Activated B cell treated with CpG ODN at 0.5 μM for 24 hours (primary cell): ENCODE measurements at regions of chr1 and their contacts with region 1.

Region 1: GRCh38 chr1:211323156-211324063 is 3.2 kb upstream of the TRAF5 start:
- DNase-seq: no peak
- ATAC-seq: peak; percentile 62
- H3K4me3 Mint-ChIP-seq: no peak overlapping the region
- H3K27ac Mint-ChIP-seq: no peak overlapping the region
- H3K4me1 Mint-ChIP-seq: peaks cover 41% of the 10 kb centered on the region
- H3K27me3 Mint-ChIP-seq: no peaks in the 10 kb centered on the region
- CTCF ChIP-seq: peak; percentile 19

Region 2: GRCh38 chr1:209784265-209785169 is 1538.9 kb before region 1 on chr1 and contains the start of gene C1orf74:
- CTCF ChIA-PET with region 1: no interaction called
- POLR2A ChIA-PET with region 1: no interaction called
- intact Hi-C with region 1: loop called (anchors 5 kb)
- DNase-seq: peak; percentile 99
- ATAC-seq: peak; percentile 98
- H3K4me3 Mint-ChIP-seq: peak within 1 kb of the TSS; percentile 99
- H3K27ac Mint-ChIP-seq: peak within 1 kb of the TSS; percentile 98
- H3K4me1 Mint-ChIP-seq: peaks cover 20% of the 10 kb centered on the region
- H3K27me3 Mint-ChIP-seq: peaks cover 10% of the 10 kb centered on the region
- CTCF ChIP-seq: no peak
- total RNA-seq, gene C1orf74: 3.7 TPM in 2 replicates

Region 3: DNA sequence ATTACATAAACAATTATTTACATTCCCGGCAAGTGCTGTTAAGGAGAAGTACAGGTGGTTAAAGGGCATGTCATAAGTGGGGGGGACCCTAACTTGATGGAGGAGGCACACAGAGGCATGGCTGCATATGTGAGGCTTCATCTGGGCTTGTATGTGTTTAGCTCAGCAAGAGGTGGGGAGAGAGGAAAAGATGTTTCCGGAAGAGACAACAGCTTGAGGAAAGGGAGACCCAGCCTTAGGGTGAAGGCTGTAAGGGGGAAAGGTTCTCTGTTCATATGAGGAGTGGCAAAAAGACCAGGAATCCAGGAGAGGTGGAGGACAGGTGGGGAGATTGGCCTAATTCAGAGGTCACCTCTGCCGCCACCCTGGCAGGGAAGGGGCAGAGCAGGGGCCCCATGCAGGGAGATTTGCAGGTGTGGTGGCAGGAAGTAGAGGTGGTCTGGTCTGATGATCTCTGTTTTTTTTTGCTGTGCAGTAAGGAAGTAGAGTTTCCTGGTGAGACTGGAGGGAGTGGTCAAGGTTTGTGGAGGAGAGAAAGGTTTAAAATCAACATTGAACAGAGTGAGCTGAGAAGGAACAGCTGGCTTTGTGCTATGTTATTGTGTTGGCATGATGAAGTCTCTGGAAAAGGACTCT is 12.2 kb after region 1 on chr1:
- CTCF ChIA-PET with region 1: interaction called, 34 read pairs
- POLR2A ChIA-PET with region 1: interaction called, 68 read pairs
- intact Hi-C with region 1: loop called (anchors 1 kb)
- DNase-seq: no peak
- ATAC-seq: peak; percentile 86
- H3K4me3 Mint-ChIP-seq: peak overlapping the region; percentile 70
- H3K27ac Mint-ChIP-seq: peak overlapping the region; percentile 88
- H3K4me1 Mint-ChIP-seq: peaks cover 100% of the 10 kb centered on the region
- H3K27me3 Mint-ChIP-seq: no peaks in the 10 kb centered on the region
- CTCF ChIP-seq: no peak

Region 4: DNA sequence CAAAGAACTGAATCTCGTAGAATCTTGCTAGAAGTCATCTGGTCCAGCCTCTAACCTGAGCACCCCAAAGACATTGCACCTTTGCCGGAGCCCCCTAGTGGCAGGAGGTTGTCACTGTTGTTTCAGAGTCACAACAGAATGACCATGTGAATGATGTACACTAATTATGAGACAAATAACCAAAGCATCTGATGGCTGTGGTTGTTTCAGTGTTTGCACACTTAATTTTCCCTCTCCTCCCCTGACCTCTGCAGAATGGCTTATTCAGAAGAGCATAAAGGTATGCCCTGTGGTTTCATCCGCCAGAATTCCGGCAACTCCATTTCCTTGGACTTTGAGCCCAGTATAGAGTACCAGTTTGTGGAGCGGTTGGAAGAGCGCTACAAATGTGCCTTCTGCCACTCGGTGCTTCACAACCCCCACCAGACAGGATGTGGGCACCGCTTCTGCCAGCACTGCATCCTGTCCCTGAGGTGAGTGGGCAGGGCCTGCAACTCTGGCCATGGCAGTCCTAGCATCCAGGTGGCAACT is 29.6 kb after region 1 on chr1:
- CTCF ChIA-PET with region 1: interaction called, 34 read pairs
- POLR2A ChIA-PET with region 1: interaction called, 5 read pairs
- intact Hi-C with region 1: loop called (anchors 1 kb)
- DNase-seq: no peak
- ATAC-seq: peak; percentile 83
- H3K4me3 Mint-ChIP-seq: peak overlapping the region; percentile 55
- H3K27ac Mint-ChIP-seq: peak overlapping the region; percentile 94
- H3K4me1 Mint-ChIP-seq: peaks cover 60% of the 10 kb centered on the region
- H3K27me3 Mint-ChIP-seq: no peaks in the 10 kb centered on the region
- CTCF ChIP-seq: no peak

Region 5: DNA sequence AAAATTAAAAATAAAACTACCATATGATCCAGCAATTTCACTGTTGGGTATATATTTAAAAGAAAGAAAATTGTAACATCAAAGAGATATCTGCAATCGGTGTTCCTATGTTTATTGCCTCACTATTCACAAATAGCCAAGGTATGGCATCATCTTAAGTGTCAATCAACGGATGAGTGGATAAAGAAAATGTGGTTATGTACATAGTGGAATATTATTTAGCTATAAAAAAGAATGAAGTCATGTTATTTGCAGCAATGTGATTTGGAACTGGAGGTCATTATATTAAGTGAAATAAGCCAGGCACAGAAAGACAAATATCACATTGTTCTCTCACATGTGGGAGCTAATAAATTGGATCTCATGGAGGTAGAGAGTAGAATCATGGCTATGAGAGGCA is 92.3 kb after region 1 on chr1:
- CTCF ChIA-PET with region 1: interaction called, 7 read pairs
- POLR2A ChIA-PET with region 1: interaction called, 5 read pairs
- intact Hi-C with region 1: loop called (anchors 2 kb)
- DNase-seq: no peak
- ATAC-seq: no peak
- H3K4me3 Mint-ChIP-seq: peak overlapping the region; percentile 66
- H3K27ac Mint-ChIP-seq: peak overlapping the region; percentile 25
- H3K4me1 Mint-ChIP-seq: peaks cover 10% of the 10 kb centered on the region
- H3K27me3 Mint-ChIP-seq: no peaks in the 10 kb centered on the region
- CTCF ChIP-seq: no peak

Region 6: DNA sequence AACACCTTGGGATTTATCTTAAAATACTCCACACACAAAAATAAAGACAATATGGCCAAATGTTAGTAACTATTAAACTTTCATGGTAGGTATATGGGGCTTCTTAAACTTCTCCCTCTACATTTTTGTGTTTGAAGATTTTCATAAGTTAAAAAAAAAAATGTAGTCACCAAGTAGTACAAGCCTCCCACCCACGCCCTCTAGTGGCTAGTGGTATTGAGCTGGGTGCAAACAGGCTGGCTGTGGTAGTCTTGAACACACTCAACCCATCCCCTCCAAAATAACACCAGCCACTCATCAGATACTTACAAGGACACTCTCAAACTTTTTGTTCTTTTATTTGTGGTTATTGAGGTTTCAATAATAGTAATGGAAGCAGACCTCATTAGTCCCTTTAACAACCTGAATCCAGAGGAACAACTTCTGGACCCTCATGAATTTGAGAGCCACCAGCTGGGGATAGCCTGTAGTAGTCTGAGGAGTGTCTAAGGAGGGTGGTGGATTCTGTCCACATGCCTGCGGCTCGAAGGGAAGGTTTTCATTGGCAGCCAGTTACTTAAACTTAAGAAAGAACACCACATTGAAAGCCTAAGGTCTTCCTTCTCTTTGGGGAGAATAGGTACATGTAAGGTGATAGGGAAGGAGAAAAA is 152.9 kb after region 1 on chr1:
- CTCF ChIA-PET with region 1: interaction called, 46 read pairs
- POLR2A ChIA-PET with region 1: interaction called, 3 read pairs
- intact Hi-C with region 1: loop called (anchors 1 kb)
- DNase-seq: peak; percentile 39
- ATAC-seq: peak; percentile 72
- H3K4me3 Mint-ChIP-seq: no peak overlapping the region
- H3K27ac Mint-ChIP-seq: no peak overlapping the region
- H3K4me1 Mint-ChIP-seq: peaks cover 2% of the 10 kb centered on the region
- H3K27me3 Mint-ChIP-seq: peaks cover 27% of the 10 kb centered on the region
- CTCF ChIP-seq: peak; percentile 56

Region 7: DNA sequence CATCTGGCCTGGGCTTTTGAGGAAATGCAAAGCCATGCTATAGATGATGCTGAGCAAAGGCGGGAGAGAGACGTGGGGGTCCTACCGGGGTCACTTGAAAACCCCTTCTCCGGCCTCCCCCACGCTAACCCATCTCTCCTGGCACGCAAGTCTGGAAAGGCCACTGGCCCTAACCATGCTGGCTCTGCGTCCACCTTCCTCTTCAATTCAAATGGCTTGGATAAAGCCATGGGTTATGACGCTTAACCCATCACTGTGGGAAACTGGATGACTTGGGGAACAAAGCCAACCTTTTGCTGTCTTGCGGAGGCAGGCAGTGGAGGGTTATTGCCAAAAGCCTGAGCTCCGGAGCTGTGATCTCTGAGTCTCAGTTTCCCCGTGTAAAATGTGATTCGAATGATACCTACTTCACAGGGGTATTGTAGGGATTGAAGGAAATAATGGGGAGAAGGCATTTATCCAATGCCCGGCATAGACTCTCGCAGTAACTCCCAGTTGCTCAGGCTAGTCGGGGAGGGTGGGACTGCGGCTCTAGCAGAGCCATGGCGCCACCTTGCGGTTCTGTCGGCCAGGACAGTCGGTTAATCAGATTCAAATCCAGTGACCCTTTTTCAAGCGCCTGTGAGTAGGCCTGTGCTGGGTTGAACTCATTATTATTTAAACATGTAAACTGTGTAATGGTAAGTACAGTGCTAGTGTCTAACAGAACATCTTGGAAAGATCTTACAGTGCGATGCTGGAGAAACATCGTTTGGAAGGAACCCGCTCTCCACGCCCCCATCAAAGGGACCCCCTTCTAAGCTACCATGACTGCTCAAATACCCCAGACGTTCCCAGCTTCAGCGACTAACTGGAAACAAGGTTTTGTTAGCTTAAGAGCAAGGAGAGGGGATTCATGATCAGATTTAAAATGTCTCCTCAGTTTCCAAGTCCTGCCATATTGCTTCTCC is 331.7 kb after region 1 on chr1:
- CTCF ChIA-PET with region 1: interaction called, 5 read pairs
- POLR2A ChIA-PET with region 1: no interaction called
- intact Hi-C with region 1: loop called (anchors 1 kb)
- DNase-seq: peak; percentile 70
- ATAC-seq: peak; percentile 91
- H3K4me3 Mint-ChIP-seq: no peak overlapping the region
- H3K27ac Mint-ChIP-seq: no peak overlapping the region
- H3K4me1 Mint-ChIP-seq: peaks cover 4% of the 10 kb centered on the region
- H3K27me3 Mint-ChIP-seq: no peaks in the 10 kb centered on the region
- CTCF ChIP-seq: peak; percentile 33

Region 8: GRCh38 chr1:211680752-211681327 is 357.4 kb after region 1 on chr1:
- CTCF ChIA-PET with region 1: no interaction called
- POLR2A ChIA-PET with region 1: no interaction called
- intact Hi-C with region 1: no loop called
- DNase-seq: peak; percentile 48
- ATAC-seq: peak; percentile 90
- H3K4me3 Mint-ChIP-seq: peak overlapping the region; percentile 26
- H3K27ac Mint-ChIP-seq: peak overlapping the region; percentile 85
- H3K4me1 Mint-ChIP-seq: peaks cover 41% of the 10 kb centered on the region
- H3K27me3 Mint-ChIP-seq: no peaks in the 10 kb centered on the region
- CTCF ChIP-seq: no peak

Region 9: GRCh38 chr1:212488397-212489283 is 1165.2 kb after region 1 on chr1:
- CTCF ChIA-PET with region 1: no interaction called
- POLR2A ChIA-PET with region 1: no interaction called
- intact Hi-C with region 1: no loop called
- DNase-seq: no peak
- ATAC-seq: peak; percentile 34
- H3K4me3 Mint-ChIP-seq: no peak overlapping the region
- H3K27ac Mint-ChIP-seq: no peak overlapping the region
- H3K4me1 Mint-ChIP-seq: peaks cover 4% of the 10 kb centered on the region
- H3K27me3 Mint-ChIP-seq: peaks cover 4% of the 10 kb centered on the region
- CTCF ChIP-seq: no peak